ENCODE measurements at regions of chr19 and their contacts with region 1.

Region 1: GRCh38 chr19:9435279-9436268 is at the start of gene ZNF266:
- DNase-seq: peak; percentile 74 to 90 (median 85)
- H3K4me3 ChIP-seq: peak within 1 kb of the TSS; percentile 68 to 100 (median 90)
- H3K27ac ChIP-seq: peak within 1 kb of the TSS; percentile 52 to 97 (median 88)
- H3K27me3 ChIP-seq: no peaks in the 10 kb centered on the region
- CTCF ChIP-seq: peak in 55 of 56 donors; percentile 47 to 92 (median 75)
- total RNA-seq, gene ZNF266: 10.7 to 38.2 (median 18.7) TPM

Region 2: GRCh38 chr19:8835877-8836276 is 599.7 kb before region 1 on chr19:
- intact Hi-C with region 1: loop called in 1 of 2 experiments (anchors 5 kb)
- DNase-seq: no peak
- H3K4me3 ChIP-seq: no peak overlapping the region
- H3K27ac ChIP-seq: no peak overlapping the region
- H3K27me3 ChIP-seq: no peaks in the 10 kb centered on the region
- CTCF ChIP-seq: no peak

Region 3: GRCh38 chr19:9140159-9140874 is 295.3 kb before region 1 on chr19 and contains the start of gene ZNF317:
- intact Hi-C with region 1: loop called in 1 of 2 experiments (anchors 10 kb)
- DNase-seq: peak; percentile 78 to 97 (median 91)
- H3K4me3 ChIP-seq: peak within 1 kb of the TSS; percentile 65 to 99 (median 91)
- H3K27ac ChIP-seq: peak within 1 kb of the TSS; percentile 35 to 96 (median 86)
- H3K27me3 ChIP-seq: no peaks in the 10 kb centered on the region
- CTCF ChIP-seq: peak in 34 of 56 donors; percentile 12 to 62 (median 32)
- total RNA-seq, gene ZNF317: 22.6 to 39.4 (median 30.9) TPM

Region 4: DNA sequence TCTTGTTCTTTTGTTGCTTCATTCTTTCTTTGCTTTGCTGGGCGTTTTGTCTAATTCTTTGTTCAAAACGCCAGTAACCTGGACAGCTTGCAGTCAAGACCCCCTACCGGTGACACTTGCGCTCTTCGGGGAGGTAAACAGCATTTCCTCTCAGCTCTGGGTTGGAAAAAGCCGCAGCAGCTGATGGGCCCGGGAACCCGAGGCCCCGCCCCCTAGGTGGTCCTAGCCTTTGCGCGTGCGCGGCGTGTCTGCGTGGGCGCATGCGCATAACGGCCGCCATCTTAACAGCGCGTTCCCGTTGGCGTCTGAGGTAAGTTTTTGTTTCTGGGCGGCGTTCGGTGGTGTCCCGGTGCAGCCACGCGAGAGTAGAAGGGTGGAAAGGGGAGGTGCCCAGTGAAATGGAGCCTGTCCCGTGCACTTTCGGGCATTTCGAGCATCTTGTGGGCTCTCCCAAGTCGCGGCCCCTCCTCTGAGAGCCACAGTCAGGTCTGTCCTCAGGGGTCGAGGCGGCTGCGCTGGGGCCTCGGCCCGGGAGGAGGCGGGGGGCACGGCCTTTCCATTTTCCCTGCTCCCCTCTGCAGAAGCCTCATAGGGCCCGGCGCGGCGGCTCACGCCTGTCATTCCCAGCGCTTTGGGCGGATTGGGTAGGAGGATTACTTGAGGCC is 111.5 kb before region 1 on chr19 and contains the start of gene ZNF559:
- intact Hi-C with region 1: loop called (anchors 5 kb)
- DNase-seq: peak; percentile 76 to 90 (median 84)
- H3K4me3 ChIP-seq: peak within 1 kb of the TSS; percentile 67 to 100 (median 89)
- H3K27ac ChIP-seq: peak within 1 kb of the TSS; percentile 52 to 96 (median 89)
- H3K27me3 ChIP-seq: no peaks in the 10 kb centered on the region
- CTCF ChIP-seq: peak in 39 of 56 donors; percentile 12 to 60 (median 31)
- total RNA-seq, gene ZNF559: 14.4 to 49.0 (median 29.6) TPM

Region 5: DNA sequence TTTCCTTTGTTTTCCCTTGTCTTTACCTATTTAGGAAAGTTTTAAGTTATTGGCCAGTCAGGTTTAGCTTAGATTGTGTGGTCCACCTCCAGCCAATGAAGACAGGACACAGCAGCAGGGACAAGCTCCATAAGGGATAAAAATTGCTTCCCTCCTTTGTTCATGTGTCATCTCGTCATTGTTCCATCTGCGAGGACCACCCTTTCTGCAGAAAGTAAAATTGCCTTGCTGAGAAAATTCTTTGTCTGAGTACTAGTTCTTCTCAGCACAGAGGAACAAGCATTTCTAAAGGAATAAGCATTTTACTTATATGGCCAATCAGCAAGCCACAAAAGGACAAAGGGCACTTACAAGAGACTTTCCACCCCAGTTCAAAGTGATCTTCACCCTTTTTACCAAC is 51.4 kb after region 1 on chr19:
- intact Hi-C with region 1: no loop called
- DNase-seq: no peak
- H3K4me3 ChIP-seq: no peak overlapping the region
- H3K27ac ChIP-seq: no peak overlapping the region
- H3K27me3 ChIP-seq: peaks cover 0 to 3% (median 0%) of the 10 kb centered on the region in 45 donors
- CTCF ChIP-seq: no peak

Region 6: DNA sequence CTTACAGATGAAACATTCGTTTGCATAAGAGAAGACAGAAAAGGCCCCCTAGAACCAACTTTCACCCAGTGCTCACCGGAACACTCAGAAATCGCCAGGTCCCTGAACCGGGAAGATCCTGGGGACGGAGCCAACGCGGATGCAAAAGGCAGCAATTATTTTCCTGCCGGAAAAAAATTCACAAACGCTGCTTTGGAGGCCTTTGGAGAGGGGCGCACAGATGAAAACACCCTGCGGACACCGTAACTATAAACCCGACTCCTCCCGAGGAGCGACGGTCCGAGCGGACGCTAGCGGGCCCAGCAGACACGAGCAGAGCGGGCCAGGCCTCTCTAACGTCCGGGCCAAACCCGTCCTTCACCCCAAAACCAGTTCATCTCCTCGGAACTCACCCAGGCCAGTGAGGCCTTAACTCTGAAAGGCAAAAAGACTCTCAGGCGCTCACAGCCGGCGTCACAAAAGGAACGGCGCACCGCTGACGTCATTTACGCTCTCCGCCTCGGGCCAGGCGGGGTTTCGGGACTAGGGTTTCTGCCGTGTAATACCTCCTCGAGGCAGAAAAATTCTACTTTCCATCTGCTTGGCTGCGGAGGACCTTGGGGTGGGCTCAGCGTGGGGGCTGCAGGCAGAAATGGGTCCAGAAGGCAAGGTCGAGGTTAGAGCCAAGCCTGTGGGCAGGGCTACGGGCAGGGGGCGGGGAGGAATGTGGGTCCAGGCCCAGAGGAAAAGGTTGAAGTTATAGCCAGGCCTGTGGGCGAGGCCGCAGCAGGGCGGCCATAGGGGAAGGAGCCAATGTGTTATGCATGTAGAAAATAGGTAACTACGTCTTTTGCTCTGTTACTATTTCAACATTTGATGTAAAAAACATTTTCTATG is 102.8 kb after region 1 on chr19 and contains the start of gene ZNF426:
- intact Hi-C with region 1: loop called in 1 of 2 experiments (anchors 2 kb)
- DNase-seq: peak; percentile 72 to 90 (median 86)
- H3K4me3 ChIP-seq: peak within 1 kb of the TSS; percentile 57 to 97 (median 83)
- H3K27ac ChIP-seq: peak within 1 kb of the TSS; percentile 69 to 98 (median 91)
- H3K27me3 ChIP-seq: no peaks in the 10 kb centered on the region
- CTCF ChIP-seq: peak in 13 of 56 donors; percentile 5 to 25 (median 11)
- total RNA-seq, gene ZNF426: 12.8 to 23.7 (median 18.0) TPM

Region 7: DNA sequence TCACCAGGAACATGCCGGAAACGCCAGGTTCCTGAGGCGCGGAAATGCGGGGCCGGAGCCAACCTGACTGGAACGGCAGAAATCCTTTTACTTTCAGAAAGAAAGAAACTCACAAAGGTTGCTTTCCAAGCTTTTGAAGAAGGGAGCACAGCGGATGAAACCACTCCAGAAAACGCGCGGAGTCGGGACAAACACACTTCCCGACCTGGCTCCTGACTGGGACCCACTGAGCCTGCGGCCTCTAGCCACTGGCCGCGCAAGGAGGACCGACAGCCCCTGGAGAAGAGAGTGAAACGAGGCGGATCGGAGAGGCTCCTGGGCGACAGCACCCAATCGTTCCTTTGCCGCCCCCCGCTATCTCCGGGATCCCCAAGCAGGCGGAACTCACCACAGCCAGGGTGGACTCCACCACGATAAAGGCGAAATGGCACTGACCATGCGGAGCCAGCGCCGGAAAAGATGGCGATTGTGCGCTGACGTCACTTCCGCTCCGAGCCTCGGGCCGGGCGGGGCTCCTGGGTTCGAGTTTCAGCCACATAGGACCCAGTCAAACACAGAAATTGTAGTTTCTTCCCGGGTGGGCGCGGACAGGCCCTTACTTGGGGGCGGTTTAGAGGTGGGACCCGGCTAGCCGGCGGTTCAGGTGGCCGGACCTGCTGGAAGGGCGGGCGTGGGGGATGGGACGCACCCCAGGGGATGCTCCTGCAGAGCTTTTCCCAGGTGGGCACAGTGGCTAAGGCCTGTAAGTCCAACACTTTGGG is 148.7 kb after region 1 on chr19 and contains the start of gene ZNF121:
- intact Hi-C with region 1: loop called in 1 of 2 experiments (anchors 10 kb)
- DNase-seq: peak; percentile 76 to 94 (median 86)
- H3K4me3 ChIP-seq: peak within 1 kb of the TSS; percentile 58 to 99 (median 88)
- H3K27ac ChIP-seq: peak within 1 kb of the TSS; percentile 51 to 98 (median 93)
- H3K27me3 ChIP-seq: peaks cover 0 to 10% (median 0%) of the 10 kb centered on the region in 45 donors
- CTCF ChIP-seq: peak in 30 of 56 donors; percentile 11 to 56 (median 27)
- total RNA-seq, gene ZNF121: 16.5 to 34.9 (median 23.7) TPM

Measured in dorsolateral prefrontal cortex (tissue), 120 donors.